ENCODE measurements at regions of chr17 and their contacts with region 1.

Region 1: DNA sequence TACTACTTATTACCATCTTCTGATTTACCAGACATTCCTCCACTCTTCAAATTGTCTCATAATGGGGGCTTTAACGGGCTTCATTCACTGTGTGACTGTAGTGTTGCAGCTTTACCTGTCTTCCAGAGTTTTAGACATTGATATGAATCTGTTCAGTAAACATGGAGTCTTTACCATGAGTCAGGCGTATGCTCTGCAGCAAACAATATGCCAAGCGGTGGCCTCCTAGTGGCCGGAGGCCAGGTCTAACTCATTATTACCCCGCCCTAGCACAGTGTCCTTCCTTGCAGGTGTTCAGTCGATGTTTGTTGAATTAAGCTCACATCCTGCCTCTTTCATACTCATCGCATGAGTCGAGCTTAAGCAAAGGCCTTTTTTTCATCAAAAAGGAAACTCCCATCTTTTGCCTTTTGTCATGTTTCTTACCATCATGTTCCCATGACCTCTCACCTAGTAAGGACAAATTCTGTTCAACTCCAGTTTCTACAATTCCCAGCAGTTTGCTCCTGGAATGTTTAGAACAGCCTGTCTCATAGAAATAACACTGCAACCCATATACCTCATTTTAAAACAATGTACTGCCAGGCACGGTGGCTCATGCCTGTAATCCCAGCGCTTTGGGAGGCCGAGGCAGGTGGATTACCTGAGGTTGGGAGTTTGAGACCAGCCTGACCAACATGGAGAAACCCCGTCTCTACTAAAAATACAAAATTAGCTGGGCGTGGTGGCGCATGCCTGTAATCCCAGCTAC is 39.4 kb downstream of the TUBD1 start:
- DNase-seq: no peak
- H3K4me3 ChIP-seq: no peak overlapping the region
- H3K27ac ChIP-seq: peak overlapping the region; percentile 0; the same call in 1 of the 2 replicates
- H3K4me1 ChIP-seq: peaks cover 0 to 7% (median 3%) of the 10 kb centered on the region in 4 experiments; a peak in 4 of 7 replicates
- H3K27me3 ChIP-seq: no peaks in the 10 kb centered on the region
- CTCF ChIP-seq: peak; percentile 60 to 75 (median 65)
- EP300 ChIP-seq: no peak
- POLR2A ChIP-seq: no peak
- RAD21 ChIP-seq: peak; percentile 45 to 62

Region 2: DNA sequence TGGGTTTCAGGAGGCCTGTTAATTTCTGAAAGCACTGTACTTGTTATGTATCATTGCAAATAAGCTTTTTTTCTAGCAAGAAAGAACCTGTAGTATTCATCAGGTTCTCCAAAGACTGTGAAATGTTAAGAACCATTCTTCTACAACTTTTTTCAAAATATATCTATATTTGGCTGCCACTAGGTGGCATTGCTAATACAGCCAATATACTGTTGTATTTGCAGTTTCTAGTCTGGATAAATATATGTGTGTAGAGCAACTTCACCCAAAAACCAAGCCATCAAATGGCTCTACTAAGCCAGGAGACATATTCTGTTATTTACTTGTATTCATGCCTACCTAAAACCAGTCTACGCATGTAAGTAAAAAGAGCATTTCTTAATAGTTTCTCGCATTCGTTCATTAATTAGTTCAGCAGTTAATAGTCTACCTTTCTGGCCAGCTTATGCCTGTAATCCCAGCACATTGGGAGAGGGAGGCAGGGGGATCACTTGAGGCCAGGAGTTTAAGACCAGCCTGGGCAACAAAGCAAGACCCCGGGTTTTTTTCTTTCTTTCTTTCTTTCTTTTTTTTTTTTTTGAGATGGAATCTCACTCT is 106.4 kb before region 1 on chr17:
- CTCF ChIA-PET with region 1: interaction called, 10 read pairs
- POLR2A ChIA-PET with region 1: interaction called, 3 read pairs
- DNase-seq: no peak
- H3K4me3 ChIP-seq: no peak overlapping the region
- H3K27ac ChIP-seq: no peak overlapping the region
- H3K4me1 ChIP-seq: no peaks in the 10 kb centered on the region
- H3K27me3 ChIP-seq: no peaks in the 10 kb centered on the region
- CTCF ChIP-seq: peak in 2 of 3 experiments; percentile 28 to 47; a peak in 2 of 4 replicates
- EP300 ChIP-seq: no peak
- POLR2A ChIP-seq: no peak
- RAD21 ChIP-seq: peak; percentile 59 to 67